Mammary epithelial cell (primary cell): ENCODE measurements at regions of chr1 and their contacts with region 1.

Region 1: DNA sequence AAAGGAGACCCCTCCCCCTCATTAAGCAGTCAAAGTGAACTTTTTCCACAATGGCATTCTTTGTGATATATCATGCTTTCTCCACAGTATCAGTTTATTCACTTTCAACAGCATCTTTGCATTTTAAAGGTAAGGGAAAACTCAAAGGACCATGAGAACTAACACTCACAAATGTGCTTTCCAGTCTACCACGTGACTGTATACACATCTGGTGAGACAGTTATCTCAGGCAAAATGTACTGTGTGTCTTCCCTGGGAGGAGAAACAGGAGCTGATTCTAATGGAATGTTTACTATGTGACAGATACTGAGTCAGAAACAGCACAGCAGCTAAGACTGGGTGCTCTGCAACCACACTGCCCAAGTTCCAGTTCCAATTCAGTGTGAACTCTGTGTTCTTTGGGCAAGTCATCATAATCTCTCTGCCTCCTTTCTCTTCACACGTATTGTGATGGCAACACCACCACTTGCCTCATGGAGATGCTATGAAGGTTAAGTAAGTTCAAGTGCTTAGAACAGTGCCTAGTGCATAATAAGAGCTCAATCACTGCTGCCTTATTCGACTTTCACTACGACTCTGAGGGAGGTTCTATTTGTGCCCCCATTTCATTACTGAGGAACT is 79.0 kb downstream of the SLC45A1 start:
- DNase-seq: peak; percentile 98
- H3K4me3 ChIP-seq: no peak overlapping the region
- H3K27ac ChIP-seq: peak overlapping the region; percentile 79
- H3K4me1 ChIP-seq: peaks cover 26% of the 10 kb centered on the region
- H3K27me3 ChIP-seq: no peaks in the 10 kb centered on the region
- CTCF ChIP-seq: no peak

Region 2: DNA sequence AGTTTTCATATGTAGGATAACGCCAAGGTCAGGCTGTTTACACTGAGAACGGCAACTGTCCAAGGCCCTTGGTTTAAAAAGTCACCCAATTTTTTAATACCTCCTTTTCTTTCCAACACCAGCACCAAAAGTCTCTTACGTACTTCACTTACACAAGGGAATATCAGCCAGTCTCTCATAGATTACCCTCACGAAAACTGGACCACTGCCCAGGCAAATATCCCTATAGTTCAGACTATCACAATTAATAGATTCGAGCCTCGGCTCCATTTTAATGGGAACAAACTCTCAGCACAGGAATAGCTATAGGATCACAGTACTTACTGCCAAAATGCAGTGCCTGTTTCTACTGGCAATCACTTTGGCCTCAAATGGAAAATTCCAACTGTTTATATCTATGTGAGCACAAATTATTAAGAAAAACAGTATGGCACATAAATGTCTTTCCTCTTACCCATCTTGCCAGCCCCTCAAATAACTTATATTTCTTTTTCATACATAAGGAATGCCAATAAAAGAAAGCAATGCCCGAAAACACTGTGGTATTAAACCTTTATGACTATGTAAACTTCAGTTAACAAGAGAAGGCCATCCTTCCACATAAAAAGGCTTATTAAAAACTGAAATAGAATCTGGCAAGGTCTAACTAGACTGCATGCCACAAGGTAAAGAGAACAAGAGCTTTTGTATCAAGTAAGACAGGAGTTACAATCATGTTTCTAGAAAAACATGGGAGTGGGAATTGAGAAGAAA is 18.8 kb after region 1 on chr1:
- CTCF ChIA-PET with region 1: no interaction called
- dilution Hi-C with region 1: no loop called
- in situ Hi-C with region 1: no loop called
- intact Hi-C with region 1: loop called (anchors 2 kb)
- DNase-seq: no peak
- H3K4me3 ChIP-seq: no peak overlapping the region
- H3K27ac ChIP-seq: no peak overlapping the region
- H3K4me1 ChIP-seq: peaks cover 5% of the 10 kb centered on the region
- H3K27me3 ChIP-seq: no peaks in the 10 kb centered on the region
- CTCF ChIP-seq: no peak